MCF 10A (cell line): ENCODE measurements at regions of chr10 and their contacts with region 1.

Region 1: DNA sequence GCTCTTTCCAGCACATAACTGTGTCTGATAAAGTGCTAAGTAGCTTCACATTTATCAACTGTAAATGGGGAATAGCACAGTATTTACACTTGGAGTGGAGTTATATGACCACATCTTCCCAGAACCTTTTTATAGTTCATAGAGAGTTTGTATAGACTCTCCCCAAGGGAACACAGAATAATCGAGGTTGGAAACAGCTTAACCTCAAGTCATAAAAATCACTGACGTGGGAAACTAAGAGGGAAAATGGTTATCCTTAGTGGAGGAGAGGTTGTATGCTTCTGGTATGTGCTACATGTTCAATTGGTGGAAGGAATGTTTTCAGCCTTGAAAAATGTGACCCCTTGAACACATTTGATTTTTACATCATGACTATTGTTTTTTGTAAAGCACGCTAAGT is 167.9 kb upstream of the KIAA1217 start:
- DNase-seq: no peak
- H3K4me3 Mint-ChIP-seq: no peak overlapping the region
- H3K27ac Mint-ChIP-seq: no peak overlapping the region
- H3K4me1 Mint-ChIP-seq: no peaks in the 10 kb centered on the region
- H3K27me3 Mint-ChIP-seq: peaks cover 53% of the 10 kb centered on the region
- CTCF ChIP-seq: no peak

Region 2: DNA sequence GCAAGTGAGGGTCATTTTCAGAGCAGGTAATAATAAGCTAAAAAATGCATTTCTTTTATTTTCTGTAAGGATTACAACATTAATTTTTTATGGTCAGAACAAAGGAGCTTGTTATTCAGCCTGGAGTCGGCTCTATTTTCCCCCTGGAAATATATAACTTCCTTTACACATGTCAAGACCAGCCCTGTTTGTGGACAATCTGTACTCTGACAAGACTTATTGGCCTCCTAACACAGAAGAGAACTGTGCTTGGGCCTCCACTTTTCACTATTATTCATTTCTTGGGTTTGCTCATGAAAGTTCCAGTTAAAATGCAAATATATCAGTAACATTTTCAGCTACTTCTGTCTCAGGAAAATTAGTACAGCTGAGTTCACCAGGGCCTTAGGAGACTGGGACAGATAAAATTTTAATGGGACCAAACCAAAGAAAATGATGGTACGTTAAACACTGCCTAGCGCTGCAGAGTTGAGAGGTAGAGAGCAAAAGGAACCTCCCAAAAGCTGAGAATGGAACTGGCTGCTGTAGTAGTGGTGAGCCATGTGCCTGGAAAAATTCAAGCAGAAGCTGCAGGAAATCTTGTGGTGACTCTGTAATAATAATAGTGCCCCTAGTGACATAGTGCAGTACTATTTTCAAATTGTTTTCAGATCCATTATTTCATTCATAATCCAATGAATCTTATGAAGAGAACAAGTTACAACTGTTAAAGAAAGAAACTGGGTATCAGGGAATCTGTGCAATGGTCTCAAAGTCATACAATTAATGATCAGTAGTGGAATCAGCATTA is 59.3 kb before region 1 on chr10:
- CTCF ChIA-PET with region 1: no interaction called
- POLR2A ChIA-PET with region 1: no interaction called
- intact Hi-C with region 1: loop called (anchors 10 kb)
- DNase-seq: no peak
- H3K4me3 Mint-ChIP-seq: no peak overlapping the region
- H3K27ac Mint-ChIP-seq: no peak overlapping the region
- H3K4me1 Mint-ChIP-seq: no peaks in the 10 kb centered on the region
- H3K27me3 Mint-ChIP-seq: peaks cover 72% of the 10 kb centered on the region
- CTCF ChIP-seq: no peak

Region 3: DNA sequence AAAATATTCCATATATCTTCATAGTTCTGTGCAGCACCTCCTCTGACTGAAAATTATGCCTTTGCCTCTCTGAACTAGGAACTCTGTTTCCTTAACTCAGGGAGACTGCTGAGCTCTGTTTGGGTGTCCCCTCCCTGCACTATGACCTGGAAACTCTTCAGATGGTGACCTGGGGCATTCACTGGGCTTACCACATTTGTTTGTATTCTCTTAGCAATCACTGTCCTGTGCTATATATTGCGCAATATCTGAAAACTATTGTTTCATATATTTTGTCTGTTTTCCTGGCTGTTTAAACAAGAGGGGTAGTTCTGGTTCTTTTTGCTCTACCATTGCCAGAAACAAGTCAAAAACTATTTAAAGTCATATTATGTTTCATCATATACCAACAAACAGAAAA is 13.9 kb before region 1 on chr10:
- CTCF ChIA-PET with region 1: no interaction called
- POLR2A ChIA-PET with region 1: no interaction called
- intact Hi-C with region 1: no loop called
- DNase-seq: peak; percentile 4
- H3K4me3 Mint-ChIP-seq: no peak overlapping the region
- H3K27ac Mint-ChIP-seq: no peak overlapping the region
- H3K4me1 Mint-ChIP-seq: no peaks in the 10 kb centered on the region
- H3K27me3 Mint-ChIP-seq: peaks cover 55% of the 10 kb centered on the region
- CTCF ChIP-seq: no peak

Region 4: GRCh38 chr10:24097751-24098207 is 56.7 kb after region 1 on chr10:
- CTCF ChIA-PET with region 1: no interaction called
- POLR2A ChIA-PET with region 1: no interaction called
- intact Hi-C with region 1: no loop called
- DNase-seq: no peak
- H3K4me3 Mint-ChIP-seq: no peak overlapping the region
- H3K27ac Mint-ChIP-seq: no peak overlapping the region
- H3K4me1 Mint-ChIP-seq: no peaks in the 10 kb centered on the region
- H3K27me3 Mint-ChIP-seq: peaks cover 5% of the 10 kb centered on the region
- CTCF ChIP-seq: no peak